ENCODE measurements at regions of chr12 and their contacts with region 1.

Region 1: GRCh38 chr12:62259993-62260732 is at the start of gene USP15:
- DNase-seq: peak; percentile 95
- H3K4me3 Mint-ChIP-seq: peak within 1 kb of the TSS; percentile 99
- H3K27ac Mint-ChIP-seq: peak within 1 kb of the TSS; percentile 93
- H3K4me1 Mint-ChIP-seq: peaks cover 53% of the 10 kb centered on the region
- H3K27me3 Mint-ChIP-seq: no peaks in the 10 kb centered on the region
- total RNA-seq, gene USP15: 82.4 and 91.1 TPM in 2 replicates

Region 2: GRCh38 chr12:62279058-62279457 is 18.9 kb after region 1 on chr12:
- intact Hi-C with region 1: loop called (anchors 2 kb)
- DNase-seq: no peak
- H3K4me3 Mint-ChIP-seq: no peak overlapping the region
- H3K27ac Mint-ChIP-seq: no peak overlapping the region
- H3K4me1 Mint-ChIP-seq: peaks cover 61% of the 10 kb centered on the region
- H3K27me3 Mint-ChIP-seq: no peaks in the 10 kb centered on the region

Region 3: DNA sequence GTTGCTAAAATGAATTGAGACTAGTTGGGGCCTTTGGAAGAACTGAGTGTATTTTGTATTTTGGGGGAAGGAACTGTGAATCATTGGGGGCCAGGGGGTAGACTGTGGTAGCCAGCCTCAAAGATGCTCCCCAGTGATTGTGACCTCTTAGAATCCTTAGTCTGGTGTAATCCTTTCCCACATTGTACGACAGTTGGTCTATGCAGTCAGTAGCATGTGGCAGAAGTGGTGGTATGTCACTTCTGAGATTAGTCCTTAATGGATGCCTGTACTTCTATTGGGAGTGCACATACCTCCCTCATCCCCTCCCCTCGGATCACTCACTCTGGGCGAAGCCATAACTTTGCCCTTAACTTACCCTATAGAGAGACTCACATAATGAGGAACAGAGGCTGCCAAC is 48.0 kb after region 1 on chr12:
- intact Hi-C with region 1: loop called (anchors 2 kb)
- DNase-seq: no peak
- H3K4me3 Mint-ChIP-seq: no peak overlapping the region
- H3K27ac Mint-ChIP-seq: peak overlapping the region; percentile 50
- H3K4me1 Mint-ChIP-seq: peaks cover 38% of the 10 kb centered on the region
- H3K27me3 Mint-ChIP-seq: no peaks in the 10 kb centered on the region

Region 4: GRCh38 chr12:62400135-62400534 is 140.0 kb after region 1 on chr12:
- intact Hi-C with region 1: loop called (anchors 5 kb)
- DNase-seq: no peak
- H3K4me3 Mint-ChIP-seq: no peak overlapping the region
- H3K27ac Mint-ChIP-seq: no peak overlapping the region
- H3K4me1 Mint-ChIP-seq: peaks cover 17% of the 10 kb centered on the region
- H3K27me3 Mint-ChIP-seq: no peaks in the 10 kb centered on the region

Region 5: DNA sequence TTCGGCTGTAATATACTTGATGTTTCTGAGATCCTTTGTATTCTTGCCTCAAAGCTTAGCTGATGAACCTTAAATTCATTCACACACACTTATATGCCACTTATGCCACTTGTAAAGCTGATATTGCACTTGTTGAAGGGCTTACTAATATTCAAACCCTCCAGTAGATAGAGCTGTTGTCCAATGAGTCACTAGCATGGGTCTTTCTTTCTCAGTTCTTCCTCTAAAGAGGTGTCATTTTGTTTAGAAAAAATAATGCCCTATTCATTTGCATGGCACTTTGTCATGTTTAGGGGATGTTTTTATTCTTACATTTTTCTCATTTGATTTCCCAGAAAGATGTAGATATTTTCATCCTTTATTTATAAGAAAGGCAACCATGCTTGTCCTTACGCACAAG is 262.8 kb after region 1 on chr12:
- intact Hi-C with region 1: loop called (anchors 5 kb)
- DNase-seq: no peak
- H3K4me3 Mint-ChIP-seq: no peak overlapping the region
- H3K27ac Mint-ChIP-seq: no peak overlapping the region
- H3K4me1 Mint-ChIP-seq: peaks cover 31% of the 10 kb centered on the region
- H3K27me3 Mint-ChIP-seq: no peaks in the 10 kb centered on the region